ENCODE measurements at regions of chr10 and their contacts with region 1.

Region 1: DNA sequence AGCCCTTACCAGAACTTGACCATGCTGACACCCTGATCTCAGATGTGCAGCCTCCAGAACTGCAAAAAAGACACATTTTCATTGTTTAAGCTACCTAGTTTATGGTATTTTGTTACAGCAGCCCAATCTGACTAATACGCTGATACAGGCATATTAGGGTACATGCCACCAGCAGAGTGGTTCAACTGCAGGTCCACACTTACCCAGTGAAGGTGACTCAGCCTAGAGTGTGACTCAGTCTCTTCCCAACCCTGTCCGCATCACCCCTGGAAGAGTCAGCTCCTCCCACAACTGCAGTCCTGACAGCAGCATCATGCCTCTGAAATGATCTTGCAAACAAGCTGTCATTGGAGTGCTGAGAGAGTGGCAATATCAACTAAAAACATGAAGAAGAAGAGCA is 30.8 kb upstream of the GOT1 start:
- DNase-seq: no peak
- H3K4me3 ChIP-seq: no peak overlapping the region
- H3K27ac ChIP-seq: no peak overlapping the region
- H3K4me1 ChIP-seq: peaks cover 3% of the 10 kb centered on the region
- H3K27me3 ChIP-seq: no peaks in the 10 kb centered on the region
- CTCF ChIP-seq: no peak
- EP300 ChIP-seq: no peak
- POLR2A ChIP-seq: no peak

Region 2: GRCh38 chr10:98160026-98160425 is 1301.2 kb before region 1 on chr10:
- intact Hi-C with region 1: loop called in 1 of 4 experiments (anchors 5 kb)
- DNase-seq: no peak
- H3K4me3 ChIP-seq: no peak overlapping the region
- H3K27ac ChIP-seq: no peak overlapping the region
- H3K4me1 ChIP-seq: peaks cover 3% of the 10 kb centered on the region
- H3K27me3 ChIP-seq: no peaks in the 10 kb centered on the region
- CTCF ChIP-seq: no peak
- EP300 ChIP-seq: no peak
- POLR2A ChIP-seq: no peak

Measured in ovary (tissue), 10 donors.